ENCODE measurements at regions of chr11 and their contacts with region 1.

Region 1: GRCh38 chr11:36746886-36747710 is 149.1 kb upstream of the RAG2 start:
- DNase-seq: peak; percentile 86
- H3K4me3 ChIP-seq: no peak overlapping the region
- H3K27ac ChIP-seq: no peak overlapping the region
- H3K4me1 ChIP-seq: peaks cover 0 to 5% (median 0%) of the 10 kb centered on the region in 4 donors
- H3K27me3 ChIP-seq: no peaks in the 10 kb centered on the region
- CTCF ChIP-seq: peak; percentile 86 to 96 (median 92)
- EP300 ChIP-seq: no peak
- POLR2A ChIP-seq: no peak

Region 2: DNA sequence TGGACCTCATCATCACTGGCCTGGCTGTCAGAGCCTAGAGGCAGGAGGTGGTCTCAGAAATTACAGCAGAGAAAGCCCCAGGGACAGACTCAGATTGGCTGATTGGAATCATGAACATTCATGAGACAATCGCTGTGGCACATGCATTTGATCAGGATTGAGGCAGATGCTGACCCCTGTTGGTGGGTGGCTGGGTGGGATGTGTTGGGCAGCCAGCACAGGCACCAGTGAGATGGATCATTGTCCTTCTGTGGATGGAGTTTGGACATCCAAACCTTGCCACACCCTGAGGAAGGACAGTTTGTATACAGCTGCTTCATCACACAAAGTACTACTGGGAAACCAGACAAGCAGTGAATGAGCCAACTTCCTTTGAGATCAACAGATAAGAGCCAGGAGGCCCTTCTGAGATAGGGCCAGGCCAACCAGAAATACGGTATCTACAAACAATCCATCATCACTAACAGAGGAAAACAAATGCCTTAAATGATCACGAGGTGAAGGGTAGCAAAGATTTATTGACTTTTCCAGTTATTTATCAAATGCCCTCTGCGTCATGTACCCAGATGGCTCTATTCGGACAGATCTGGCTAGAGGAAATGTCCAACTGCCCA is 475.2 kb before region 1 on chr11:
- intact Hi-C with region 1: no loop called
- DNase-seq: no peak
- H3K4me3 ChIP-seq: no peak overlapping the region
- H3K27ac ChIP-seq: no peak overlapping the region
- H3K4me1 ChIP-seq: no peaks in the 10 kb centered on the region
- H3K27me3 ChIP-seq: no peaks in the 10 kb centered on the region
- CTCF ChIP-seq: no peak
- EP300 ChIP-seq: no peak
- POLR2A ChIP-seq: no peak

Region 3: GRCh38 chr11:36702330-36703055 is 44.6 kb before region 1 on chr11:
- intact Hi-C with region 1: loop called (anchors 2 kb)
- DNase-seq: no peak
- H3K4me3 ChIP-seq: no peak overlapping the region
- H3K27ac ChIP-seq: no peak overlapping the region
- H3K4me1 ChIP-seq: no peaks in the 10 kb centered on the region
- H3K27me3 ChIP-seq: no peaks in the 10 kb centered on the region
- CTCF ChIP-seq: peak; percentile 40 to 75 (median 68)
- EP300 ChIP-seq: no peak
- POLR2A ChIP-seq: no peak

Region 4: GRCh38 chr11:36790526-36790925 is 43.4 kb after region 1 on chr11:
- intact Hi-C with region 1: no loop called
- DNase-seq: no peak
- H3K4me3 ChIP-seq: no peak overlapping the region
- H3K27ac ChIP-seq: no peak overlapping the region
- H3K4me1 ChIP-seq: peaks cover 0 to 21% (median 8%) of the 10 kb centered on the region in 4 donors
- H3K27me3 ChIP-seq: no peaks in the 10 kb centered on the region
- CTCF ChIP-seq: no peak
- EP300 ChIP-seq: no peak
- POLR2A ChIP-seq: no peak

Region 5: GRCh38 chr11:36803084-36803483 is 56.0 kb after region 1 on chr11:
- intact Hi-C with region 1: no loop called
- DNase-seq: no peak
- H3K4me3 ChIP-seq: no peak overlapping the region
- H3K27ac ChIP-seq: no peak overlapping the region
- H3K4me1 ChIP-seq: no peaks in the 10 kb centered on the region
- H3K27me3 ChIP-seq: no peaks in the 10 kb centered on the region
- CTCF ChIP-seq: no peak
- EP300 ChIP-seq: no peak
- POLR2A ChIP-seq: no peak